SK-N-SH (cell line): ENCODE measurements at regions of chr2 and their contacts with region 1.

Region 1: DNA sequence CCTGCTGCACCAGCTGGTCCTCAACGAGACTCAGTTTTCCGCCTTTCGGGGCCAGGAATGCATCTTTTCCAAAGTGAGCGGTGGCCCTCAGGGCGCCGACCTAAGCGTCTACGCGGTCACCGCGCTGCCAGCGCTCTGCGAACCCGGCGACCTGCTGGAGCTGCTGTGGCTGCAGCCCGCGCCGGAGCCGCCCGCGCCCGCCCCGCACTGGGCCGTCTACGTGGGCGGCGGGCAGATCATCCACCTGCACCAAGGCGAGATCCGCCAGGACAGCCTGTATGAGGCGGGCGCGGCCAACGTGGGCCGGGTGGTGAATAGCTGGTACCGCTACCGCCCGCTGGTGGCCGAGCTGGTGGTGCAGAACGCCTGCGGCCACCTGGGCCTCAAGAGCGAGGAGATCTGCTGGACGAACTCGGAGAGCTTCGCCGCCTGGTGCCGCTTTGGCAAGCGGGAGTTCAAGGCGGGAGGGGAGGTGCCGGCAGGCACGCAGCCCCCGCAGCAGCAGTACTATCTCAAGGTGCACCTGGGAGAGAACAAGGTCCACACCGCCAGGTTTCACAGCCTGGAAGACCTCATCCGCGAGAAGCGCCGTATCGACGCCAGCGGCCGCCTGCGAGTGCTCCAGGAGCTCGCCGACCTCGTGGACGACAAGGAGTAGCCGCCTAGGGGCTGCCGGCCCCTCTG is 1.8 kb downstream of the LRATD1 start:
- DNase-seq: peak; percentile 94
- H3K4me3 ChIP-seq: peak overlapping the region; percentile 52 to 67
- H3K27ac ChIP-seq: no peak overlapping the region
- H3K4me1 ChIP-seq: peaks cover 0 to 33% of the 10 kb centered on the region in 2 experiments; a peak in 2 of 4 replicates
- H3K27me3 ChIP-seq: peaks cover 15% of the 10 kb centered on the region
- CTCF ChIP-seq: peak; percentile 82
- EP300 ChIP-seq: no peak; a peak in 1 of 4 replicates
- RAD21 ChIP-seq: peak; percentile 62

Region 2: DNA sequence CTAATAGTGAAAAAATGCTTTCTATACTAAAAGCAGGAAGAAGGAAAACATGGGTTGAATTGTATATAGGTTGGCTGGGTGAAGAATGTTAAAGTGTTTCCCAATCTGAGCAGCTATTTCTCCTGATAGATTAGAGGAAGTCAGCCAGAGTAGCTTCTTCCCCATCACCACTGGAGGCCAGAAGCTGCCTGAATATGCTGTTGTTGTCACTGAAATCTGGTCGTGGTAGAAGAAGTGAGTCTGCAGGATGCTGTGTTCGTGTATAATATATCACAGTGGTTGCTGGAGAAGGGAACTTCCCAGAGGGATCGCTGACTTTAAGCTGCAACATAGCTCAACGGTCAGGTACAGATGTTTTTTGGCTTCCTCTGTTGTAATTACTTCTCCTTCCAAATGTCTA is 249.3 kb before region 1 on chr2:
- CTCF ChIA-PET with region 1: no interaction called
- POLR2A ChIA-PET with region 1: no interaction called
- DNase-seq: no peak
- H3K4me3 ChIP-seq: no peak overlapping the region
- H3K27ac ChIP-seq: no peak overlapping the region
- H3K4me1 ChIP-seq: no peaks in the 10 kb centered on the region
- H3K27me3 ChIP-seq: no peaks in the 10 kb centered on the region
- CTCF ChIP-seq: peak; percentile 24; the same call in 1 of the 2 replicates
- EP300 ChIP-seq: no peak
- RAD21 ChIP-seq: no peak

Region 3: DNA sequence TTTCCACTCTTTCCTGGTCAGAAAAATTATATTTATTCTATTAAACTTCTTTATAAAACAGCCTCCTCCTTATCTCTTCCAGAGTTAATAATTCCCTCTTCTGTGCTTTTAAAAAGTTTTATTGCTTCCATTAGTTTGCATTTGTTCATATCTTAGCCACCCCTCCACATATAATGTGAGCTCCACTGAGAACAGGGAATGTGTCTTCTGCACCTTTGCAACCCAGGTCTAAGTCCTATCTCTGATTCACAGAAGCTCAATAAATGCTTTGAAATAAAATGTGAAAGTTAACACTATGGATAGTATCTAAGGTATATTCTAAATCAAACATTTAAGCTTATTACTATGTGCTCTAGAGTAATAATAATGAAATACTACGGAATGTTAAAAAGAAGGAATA is 11.1 kb before region 1 on chr2:
- CTCF ChIA-PET with region 1: interaction called, 16 read pairs
- POLR2A ChIA-PET with region 1: no interaction called
- DNase-seq: no peak
- H3K4me3 ChIP-seq: no peak overlapping the region
- H3K27ac ChIP-seq: no peak overlapping the region
- H3K4me1 ChIP-seq: no peaks in the 10 kb centered on the region
- H3K27me3 ChIP-seq: no peaks in the 10 kb centered on the region
- CTCF ChIP-seq: no peak
- EP300 ChIP-seq: no peak
- RAD21 ChIP-seq: no peak

Region 4: DNA sequence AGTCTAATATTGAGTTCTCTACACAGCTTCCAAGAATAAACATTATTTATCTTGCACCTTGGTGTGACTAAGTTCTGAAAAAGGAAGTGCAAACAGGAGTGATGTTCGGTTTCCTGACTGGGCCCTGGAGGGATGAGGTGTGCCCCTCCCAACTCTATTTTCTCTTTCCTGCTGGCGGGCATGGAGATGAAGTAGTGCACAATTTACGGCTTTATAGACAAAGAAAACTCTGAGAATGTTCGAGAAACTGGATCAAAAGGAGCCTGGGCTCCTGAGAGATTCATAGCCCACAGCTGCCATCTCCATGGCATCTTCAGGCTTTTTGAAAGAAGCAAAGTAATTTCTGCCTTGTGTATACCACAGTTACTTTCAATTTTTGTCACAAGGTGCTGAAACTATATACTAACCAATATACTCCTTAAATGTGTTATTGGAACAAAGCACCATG is 20.5 kb after region 1 on chr2:
- CTCF ChIA-PET with region 1: interaction called, 31 read pairs
- POLR2A ChIA-PET with region 1: no interaction called
- DNase-seq: no peak
- H3K4me3 ChIP-seq: no peak overlapping the region
- H3K27ac ChIP-seq: no peak overlapping the region
- H3K4me1 ChIP-seq: no peaks in the 10 kb centered on the region; a peak in 1 of 4 replicates
- H3K27me3 ChIP-seq: no peaks in the 10 kb centered on the region
- CTCF ChIP-seq: no peak
- EP300 ChIP-seq: no peak
- RAD21 ChIP-seq: no peak

Region 5: DNA sequence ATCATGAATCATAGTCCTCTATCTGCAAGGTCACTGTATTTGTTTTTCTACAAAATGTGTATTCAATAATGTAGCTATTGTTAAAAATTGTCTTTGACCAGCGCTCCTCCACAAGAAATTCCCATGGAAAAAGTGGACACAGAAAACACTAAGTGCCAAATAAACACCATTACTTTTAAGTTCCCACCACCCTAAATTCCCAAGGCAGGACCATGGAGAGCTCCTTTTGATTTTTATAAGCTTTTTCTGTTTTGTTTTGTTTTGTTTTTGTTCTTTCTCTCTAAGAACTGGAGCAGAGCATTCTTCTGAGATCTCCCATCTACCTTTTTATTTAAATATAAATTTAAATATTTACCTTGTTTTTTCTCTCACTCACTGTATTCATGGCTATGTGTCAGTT is 42.7 kb after region 1 on chr2:
- CTCF ChIA-PET with region 1: interaction called, 15 read pairs
- POLR2A ChIA-PET with region 1: no interaction called
- DNase-seq: no peak
- H3K4me3 ChIP-seq: no peak overlapping the region
- H3K27ac ChIP-seq: no peak overlapping the region
- H3K4me1 ChIP-seq: peaks cover 0 to 12% of the 10 kb centered on the region in 2 experiments; a peak in 2 of 4 replicates
- H3K27me3 ChIP-seq: no peaks in the 10 kb centered on the region
- CTCF ChIP-seq: no peak
- EP300 ChIP-seq: no peak
- RAD21 ChIP-seq: no peak

Region 6: GRCh38 chr2:14684516-14684915 is 50.2 kb after region 1 on chr2:
- CTCF ChIA-PET with region 1: interaction called, 11 read pairs
- POLR2A ChIA-PET with region 1: no interaction called
- DNase-seq: no peak
- H3K4me3 ChIP-seq: no peak overlapping the region
- H3K27ac ChIP-seq: no peak overlapping the region
- H3K4me1 ChIP-seq: no peaks in the 10 kb centered on the region
- H3K27me3 ChIP-seq: no peaks in the 10 kb centered on the region
- CTCF ChIP-seq: no peak
- EP300 ChIP-seq: no peak
- RAD21 ChIP-seq: no peak

Region 7: DNA sequence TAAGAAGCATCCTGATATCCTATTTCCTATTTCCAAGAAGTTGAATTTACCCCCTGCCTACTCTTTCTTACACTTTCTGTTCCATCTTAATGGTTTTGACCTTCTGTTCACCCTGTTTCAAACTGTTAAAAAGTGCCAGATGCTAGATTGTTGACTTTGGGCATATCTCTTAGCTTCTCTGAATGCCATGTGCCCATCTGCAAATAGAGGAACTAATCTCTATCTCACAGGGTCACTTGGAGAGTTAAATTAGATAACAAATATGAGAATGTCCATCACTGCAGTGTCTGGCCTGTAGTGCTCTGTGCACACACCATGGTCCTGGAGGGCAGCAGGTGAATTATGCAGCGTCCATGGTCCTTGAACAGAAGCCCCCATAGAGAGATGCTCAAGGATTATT is 82.0 kb after region 1 on chr2:
- CTCF ChIA-PET with region 1: interaction called, 15 read pairs
- POLR2A ChIA-PET with region 1: no interaction called
- DNase-seq: peak; percentile 29
- H3K4me3 ChIP-seq: no peak overlapping the region
- H3K27ac ChIP-seq: no peak overlapping the region
- H3K4me1 ChIP-seq: peaks cover 0 to 20% of the 10 kb centered on the region in 2 experiments; a peak in 2 of 4 replicates
- H3K27me3 ChIP-seq: no peaks in the 10 kb centered on the region
- CTCF ChIP-seq: no peak
- EP300 ChIP-seq: peak in 1 of 2 experiments; percentile 61; a peak in 1 of 4 replicates
- RAD21 ChIP-seq: no peak